AG04450 (cell line): ENCODE measurements at regions of chr2 and their contacts with region 1.

Region 1: DNA sequence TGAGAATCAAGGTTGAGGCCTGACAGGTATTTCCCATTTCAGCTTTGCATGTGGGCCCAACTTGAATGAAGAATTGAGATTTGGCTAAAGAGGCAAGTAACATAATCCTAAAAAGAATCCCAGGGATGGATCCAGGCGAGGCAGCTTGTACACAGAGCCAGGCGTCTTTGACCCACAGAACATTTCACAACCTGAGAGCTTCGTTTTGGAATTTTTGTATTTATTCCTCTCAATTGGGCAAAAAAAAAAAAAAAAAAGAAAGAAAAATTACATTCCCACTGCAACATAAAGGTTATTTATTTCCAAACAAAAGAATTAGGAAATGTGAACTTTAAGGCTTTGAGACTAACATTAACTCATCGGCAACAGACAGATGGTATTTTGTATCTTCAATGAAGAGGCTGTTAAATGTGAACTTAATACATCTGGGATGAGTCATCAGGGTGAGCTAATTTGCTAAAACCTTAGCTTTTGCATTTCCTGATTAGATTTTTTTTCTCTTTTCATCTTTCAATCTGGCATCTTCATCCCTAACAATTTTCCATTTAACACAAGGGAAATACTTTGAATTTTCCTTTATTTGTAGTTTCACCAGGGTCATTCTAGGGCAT is 478.5 kb upstream of the TNP1 start:
- DNase-seq: peak; percentile 89
- H3K4me3 ChIP-seq: no peak overlapping the region
- H3K27ac ChIP-seq: peak overlapping the region; percentile 50
- H3K27me3 ChIP-seq: no peaks in the 10 kb centered on the region
- CTCF ChIP-seq: no peak

Region 2: DNA sequence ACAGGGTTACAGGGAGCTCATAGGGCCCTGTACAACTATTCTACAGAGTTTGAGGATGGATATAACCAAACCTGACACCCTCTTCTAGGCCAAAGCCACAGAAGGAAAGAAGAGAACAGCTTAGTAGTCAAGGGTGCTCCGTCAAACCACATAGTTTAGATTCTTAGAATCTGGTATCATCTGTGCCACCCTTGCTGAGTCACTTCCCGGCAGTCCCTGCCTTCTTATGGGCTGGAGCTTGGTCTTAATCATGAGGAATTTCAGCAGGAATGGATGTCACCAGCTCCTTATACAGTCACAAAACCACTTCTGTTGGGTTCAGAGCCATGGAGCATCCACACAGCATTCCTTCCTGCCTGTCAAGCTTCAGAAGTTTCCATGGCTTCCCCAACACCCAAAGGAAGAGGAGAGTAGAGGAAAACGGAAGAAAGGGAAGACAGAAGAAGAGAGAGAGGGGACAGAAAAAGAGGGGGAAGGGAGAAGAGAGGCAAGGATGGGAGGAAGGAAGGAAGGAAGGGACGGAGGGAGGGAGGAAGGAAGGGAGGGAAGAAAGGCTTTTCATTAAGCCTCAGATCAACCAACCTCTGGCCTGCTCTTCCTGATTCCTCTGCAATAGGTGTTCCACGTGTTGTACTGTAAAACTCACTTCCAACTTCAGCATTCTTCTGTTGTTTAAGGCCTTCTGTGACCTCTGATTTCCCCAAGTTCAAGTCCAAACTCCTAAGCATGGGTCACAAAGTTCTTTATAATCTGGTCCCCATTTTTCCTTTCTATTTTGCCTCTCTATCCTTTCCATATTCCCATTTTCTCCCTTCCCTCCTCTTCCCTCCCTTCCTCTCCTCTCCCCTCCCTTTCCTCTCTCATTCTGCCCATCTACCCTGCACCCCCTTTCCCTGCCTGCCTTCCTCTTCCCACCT is 232.4 kb before region 1 on chr2:
- CTCF ChIA-PET with region 1: no interaction called
- POLR2A ChIA-PET with region 1: interaction called, 25 read pairs
- DNase-seq: peak; percentile 81
- H3K4me3 ChIP-seq: no peak overlapping the region
- H3K27ac ChIP-seq: peak overlapping the region; percentile 87
- H3K27me3 ChIP-seq: no peaks in the 10 kb centered on the region
- CTCF ChIP-seq: no peak

Region 3: GRCh38 chr2:217289877-217290279 is 48.5 kb before region 1 on chr2:
- CTCF ChIA-PET with region 1: no interaction called
- POLR2A ChIA-PET with region 1: interaction called, 20 read pairs
- DNase-seq: no peak
- H3K4me3 ChIP-seq: no peak overlapping the region
- H3K27ac ChIP-seq: no peak overlapping the region
- H3K27me3 ChIP-seq: no peaks in the 10 kb centered on the region
- CTCF ChIP-seq: no peak

Region 4: DNA sequence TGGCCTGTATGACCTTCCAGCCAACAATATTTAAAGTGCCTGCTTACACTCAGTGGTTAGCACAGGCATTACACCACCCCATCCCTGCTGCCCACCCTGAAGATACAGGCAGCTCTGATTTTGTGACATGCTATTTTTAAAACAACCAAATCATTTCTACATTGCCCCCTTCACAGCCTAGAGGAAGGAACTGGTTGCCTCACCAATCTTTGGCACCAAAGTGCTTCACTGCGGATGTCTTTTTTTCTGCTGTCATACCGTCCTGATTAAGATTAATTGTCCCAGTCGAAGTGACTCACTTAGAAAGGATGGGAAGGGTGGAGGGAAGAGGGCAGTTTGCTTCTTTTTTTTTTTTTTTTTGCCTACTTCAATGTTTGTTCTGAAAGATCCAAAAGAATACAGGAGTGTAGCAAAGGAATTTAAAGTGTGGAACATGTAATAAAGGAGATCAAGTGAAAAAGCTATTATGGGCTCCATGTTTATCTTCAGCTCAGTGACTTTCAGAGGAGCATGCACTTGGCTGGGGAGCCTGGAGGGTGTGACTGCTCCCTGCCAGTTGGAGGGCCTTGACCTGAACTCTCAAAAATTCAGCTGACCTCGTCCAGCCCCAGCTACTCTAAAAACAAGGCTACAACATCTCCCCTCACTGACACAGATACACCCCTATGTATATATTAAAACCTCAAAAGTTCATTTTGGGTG is 22.5 kb after region 1 on chr2:
- CTCF ChIA-PET with region 1: interaction called, 4 read pairs
- POLR2A ChIA-PET with region 1: interaction called, 18 read pairs
- DNase-seq: peak; percentile 65
- H3K4me3 ChIP-seq: no peak overlapping the region
- H3K27ac ChIP-seq: peak overlapping the region; percentile 41
- H3K27me3 ChIP-seq: no peaks in the 10 kb centered on the region
- CTCF ChIP-seq: no peak

Region 5: DNA sequence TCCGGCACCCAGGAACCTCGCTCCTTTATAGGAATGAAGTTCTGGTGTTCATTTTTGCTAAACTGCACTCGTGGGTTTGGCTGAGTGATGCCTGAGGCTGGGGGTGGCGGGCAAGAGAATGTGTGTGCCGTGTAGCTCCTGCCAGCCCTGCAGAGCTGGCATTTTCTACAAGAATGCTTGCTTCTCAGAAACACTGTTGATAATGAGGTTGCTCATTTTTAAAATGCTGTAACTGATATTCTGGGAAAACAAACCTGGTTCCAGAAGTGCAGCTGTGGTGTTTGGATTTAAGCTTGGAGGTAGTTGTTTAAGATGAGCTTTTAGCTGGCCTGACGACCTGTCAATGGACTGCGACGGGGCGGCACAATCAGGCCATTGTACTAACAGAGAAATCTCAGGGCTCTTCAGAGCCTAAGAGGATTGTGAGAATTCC is 33.4 kb after region 1 on chr2:
- CTCF ChIA-PET with region 1: no interaction called
- POLR2A ChIA-PET with region 1: interaction called, 10 read pairs
- DNase-seq: no peak
- H3K4me3 ChIP-seq: no peak overlapping the region
- H3K27ac ChIP-seq: peak overlapping the region; percentile 35
- H3K27me3 ChIP-seq: no peaks in the 10 kb centered on the region
- CTCF ChIP-seq: no peak

Region 6: DNA sequence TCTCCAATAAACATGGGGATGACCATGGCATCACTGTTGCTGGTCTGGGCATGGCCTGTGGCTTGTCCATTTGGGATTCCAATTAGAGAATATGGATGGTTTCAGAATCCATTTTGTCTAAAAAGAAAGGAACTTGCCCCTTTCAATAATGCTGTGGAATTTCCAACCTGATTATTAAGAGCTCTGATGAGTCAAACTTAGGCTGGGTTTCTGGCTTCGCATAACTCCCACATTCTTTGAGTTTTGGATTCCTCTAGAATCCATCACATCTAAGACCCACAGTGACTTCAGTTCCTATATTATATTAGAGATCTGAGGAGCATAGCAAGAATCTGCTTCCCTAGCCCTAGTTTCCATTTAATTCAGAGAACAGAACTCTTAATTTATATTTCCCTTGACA is 132.9 kb after region 1 on chr2:
- CTCF ChIA-PET with region 1: no interaction called
- POLR2A ChIA-PET with region 1: no interaction called
- DNase-seq: peak; percentile 36
- H3K4me3 ChIP-seq: no peak overlapping the region
- H3K27ac ChIP-seq: no peak overlapping the region
- H3K27me3 ChIP-seq: no peaks in the 10 kb centered on the region
- CTCF ChIP-seq: no peak

Region 7: DNA sequence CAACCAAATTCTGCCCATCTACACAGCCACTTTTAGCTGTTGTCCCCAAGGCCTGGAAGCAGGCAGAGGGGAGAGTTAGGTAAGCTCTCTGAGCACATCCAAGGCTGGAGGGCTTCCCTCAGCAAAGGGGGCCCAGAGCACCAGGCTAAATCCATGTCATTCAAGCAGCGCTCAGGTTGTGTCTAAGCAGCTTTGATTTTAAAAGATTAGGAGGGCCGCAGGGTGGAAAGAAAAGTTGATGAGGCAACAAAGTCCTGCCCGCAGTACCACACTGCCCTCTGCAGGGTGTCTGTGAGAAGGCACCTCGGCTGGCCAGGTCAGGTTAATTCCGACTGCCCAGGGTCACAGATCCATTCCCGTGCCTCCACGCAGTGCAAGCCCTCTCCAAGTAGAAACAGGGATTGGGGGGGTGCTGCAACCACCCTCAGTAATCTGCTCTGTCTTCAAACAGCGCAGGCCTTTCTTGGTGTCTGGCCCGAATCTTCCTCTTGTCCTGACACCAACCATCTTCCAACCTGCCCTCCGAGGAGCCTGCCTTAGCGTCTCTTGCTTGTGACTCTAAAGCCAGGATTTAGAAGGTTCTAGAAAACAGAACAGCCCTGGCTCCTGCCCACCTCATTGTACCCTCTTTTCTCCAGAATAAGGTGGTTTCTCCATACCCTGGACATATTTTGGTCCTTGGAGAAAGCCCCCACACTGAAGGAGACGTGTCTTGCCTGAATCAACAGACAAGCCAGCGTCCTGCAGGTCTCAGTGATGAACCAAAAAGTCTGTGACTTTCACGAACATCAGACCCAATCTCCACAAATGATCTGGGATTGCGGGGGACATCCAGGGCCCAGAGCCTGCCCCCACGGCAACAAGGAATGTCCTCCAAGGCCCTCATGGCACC is 375.2 kb after region 1 on chr2:
- CTCF ChIA-PET with region 1: interaction called, 12 read pairs
- POLR2A ChIA-PET with region 1: interaction called, 6 read pairs
- DNase-seq: peak; percentile 54
- H3K4me3 ChIP-seq: no peak overlapping the region
- H3K27ac ChIP-seq: peak overlapping the region; percentile 31
- H3K27me3 ChIP-seq: no peaks in the 10 kb centered on the region
- CTCF ChIP-seq: peak; percentile 97